Lower lobe of right lung (tissue), 2 donors: ENCODE measurements at regions of chr1 and their contacts with region 1.

Region 1: GRCh38 chr1:65959896-65960567 is 167.3 kb downstream of the PDE4B start:
- DNase-seq: no peak
- ATAC-seq: no peak
- H3K4me3 ChIP-seq: no peak overlapping the region
- H3K27ac ChIP-seq: no peak overlapping the region
- H3K4me1 ChIP-seq: no peaks in the 10 kb centered on the region
- H3K27me3 ChIP-seq: no peaks in the 10 kb centered on the region
- CTCF ChIP-seq: no peak

Region 2: DNA sequence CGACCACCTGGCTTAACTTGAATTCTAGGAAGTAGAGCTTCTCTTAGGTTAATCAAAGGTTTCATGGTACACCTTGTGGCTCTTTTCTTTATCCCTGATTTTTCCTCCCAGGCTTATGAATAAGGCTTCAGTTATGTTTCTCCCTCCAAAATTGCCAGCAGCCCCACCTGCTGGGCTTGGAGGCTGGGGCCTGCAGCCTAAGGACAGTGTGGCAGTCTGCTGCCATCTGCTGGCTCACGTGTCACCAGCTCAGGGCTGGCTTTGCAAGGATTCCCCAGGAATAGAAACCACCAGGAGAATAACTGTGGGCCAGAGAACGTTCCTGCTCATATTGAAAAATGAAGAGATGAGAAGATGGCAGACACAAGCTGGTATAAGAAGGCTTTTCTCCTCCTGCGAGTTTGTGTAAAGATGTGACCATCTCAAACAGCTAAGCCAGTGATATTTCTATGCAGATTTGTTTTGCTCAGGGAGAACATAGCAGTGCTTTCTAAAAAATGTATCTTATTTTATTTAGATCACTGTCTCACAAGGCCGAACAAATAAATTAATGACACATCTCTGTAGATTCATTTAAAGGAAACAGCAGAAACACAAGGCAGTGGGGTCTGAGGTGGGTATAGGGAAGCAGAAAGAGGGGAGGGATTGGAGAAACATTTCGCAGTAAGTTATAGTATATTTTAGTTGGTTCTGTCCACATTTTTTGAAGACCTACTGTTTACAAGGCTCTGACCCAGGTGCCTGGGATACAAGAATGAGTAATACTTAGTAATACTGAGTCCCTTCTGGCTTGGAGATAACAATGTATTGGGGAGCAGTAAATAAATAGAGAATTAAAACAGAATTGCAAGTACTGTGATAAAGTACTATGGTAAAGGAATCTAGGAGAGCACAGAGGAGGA is 282.9 kb after region 1 on chr1:
- intact Hi-C with region 1: loop called (anchors 5 kb)
- DNase-seq: peak; percentile 83
- ATAC-seq: peak; percentile 95 to 96
- H3K4me3 ChIP-seq: no peak overlapping the region
- H3K27ac ChIP-seq: no peak overlapping the region
- H3K4me1 ChIP-seq: peaks cover 5% of the 10 kb centered on the region
- H3K27me3 ChIP-seq: no peaks in the 10 kb centered on the region
- CTCF ChIP-seq: peak; percentile 98

Region 3: DNA sequence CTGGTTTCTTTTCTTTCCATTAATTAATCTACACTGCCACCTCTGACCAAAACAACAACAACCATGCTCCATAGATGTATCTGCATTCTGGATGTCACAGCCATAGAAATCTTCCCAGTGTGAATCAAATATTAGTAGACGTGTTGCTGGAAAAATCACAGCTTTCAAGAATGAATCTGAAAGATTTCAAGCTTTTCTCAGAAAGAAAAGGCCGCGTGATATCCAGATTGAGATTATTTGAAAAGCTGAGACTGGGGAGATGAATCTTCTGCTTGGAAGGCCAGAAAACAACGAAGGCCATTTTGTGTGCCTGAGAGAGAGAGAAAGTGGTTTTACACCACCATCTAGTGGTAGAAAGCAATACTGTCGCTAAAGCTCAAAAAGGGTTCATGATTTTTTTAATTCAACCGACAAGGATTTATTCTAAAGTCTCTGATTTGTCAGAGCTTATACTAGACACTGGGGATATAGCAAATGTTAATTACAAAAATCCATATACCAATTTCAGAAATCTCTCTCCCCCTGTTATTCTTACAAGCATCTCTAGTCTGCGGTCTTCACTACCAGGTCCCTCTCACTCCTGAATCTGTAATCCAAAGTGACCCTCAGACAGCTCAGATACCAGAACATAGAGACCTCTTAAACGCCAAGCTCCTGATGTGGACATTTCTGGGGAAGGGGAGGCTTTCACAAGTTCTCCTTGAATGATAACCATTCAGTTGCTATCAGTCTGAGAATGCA is 486.4 kb after region 1 on chr1:
- intact Hi-C with region 1: loop called (anchors 10 kb)
- DNase-seq: no peak
- ATAC-seq: peak; percentile 80 to 87
- H3K4me3 ChIP-seq: no peak overlapping the region
- H3K27ac ChIP-seq: peak overlapping the region; percentile 73
- H3K4me1 ChIP-seq: peaks cover 27% of the 10 kb centered on the region
- H3K27me3 ChIP-seq: no peaks in the 10 kb centered on the region
- CTCF ChIP-seq: peak; percentile 89